AG04450 (cell line): ENCODE measurements at regions of chr11 and their contacts with region 1.

Region 1: DNA sequence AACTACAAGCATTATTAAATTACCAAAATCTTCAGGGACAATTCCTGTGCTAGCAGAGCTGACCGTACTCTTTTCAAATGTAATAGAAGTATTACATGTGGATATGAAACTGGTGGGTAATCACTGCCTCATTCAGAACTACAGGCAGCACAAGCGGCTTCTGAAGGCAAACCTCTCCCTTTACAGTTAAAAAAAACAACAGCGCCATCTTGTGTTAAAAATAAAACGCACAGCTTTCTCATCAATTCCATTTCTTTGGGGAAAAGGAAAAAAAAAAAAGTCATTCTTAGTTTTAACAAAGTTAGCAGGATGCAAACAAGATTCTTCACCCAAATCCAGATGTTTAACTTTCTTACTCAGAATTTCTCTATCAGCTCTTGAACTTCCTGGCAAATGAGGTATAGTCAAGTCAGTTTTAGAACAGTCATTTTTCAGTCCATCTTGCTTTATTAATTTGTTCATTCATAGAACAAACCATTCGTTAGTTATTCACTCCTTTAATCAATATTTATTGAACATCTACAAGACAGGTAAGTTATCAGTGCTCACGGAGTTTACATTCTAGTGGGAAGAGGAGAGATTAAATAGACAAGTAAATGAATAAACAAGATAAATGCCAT is 331.8 kb upstream of the MPPED2 start:
- DNase-seq: peak; percentile 4
- H3K4me3 ChIP-seq: no peak overlapping the region
- H3K27ac ChIP-seq: no peak overlapping the region
- H3K27me3 ChIP-seq: no peaks in the 10 kb centered on the region
- CTCF ChIP-seq: peak; percentile 58

Region 2: GRCh38 chr11:30895046-30895445 is 22.9 kb before region 1 on chr11:
- CTCF ChIA-PET with region 1: interaction called, 10 read pairs
- POLR2A ChIA-PET with region 1: no interaction called
- DNase-seq: no peak
- H3K4me3 ChIP-seq: no peak overlapping the region
- H3K27ac ChIP-seq: no peak overlapping the region
- H3K27me3 ChIP-seq: no peaks in the 10 kb centered on the region
- CTCF ChIP-seq: no peak

Region 3: DNA sequence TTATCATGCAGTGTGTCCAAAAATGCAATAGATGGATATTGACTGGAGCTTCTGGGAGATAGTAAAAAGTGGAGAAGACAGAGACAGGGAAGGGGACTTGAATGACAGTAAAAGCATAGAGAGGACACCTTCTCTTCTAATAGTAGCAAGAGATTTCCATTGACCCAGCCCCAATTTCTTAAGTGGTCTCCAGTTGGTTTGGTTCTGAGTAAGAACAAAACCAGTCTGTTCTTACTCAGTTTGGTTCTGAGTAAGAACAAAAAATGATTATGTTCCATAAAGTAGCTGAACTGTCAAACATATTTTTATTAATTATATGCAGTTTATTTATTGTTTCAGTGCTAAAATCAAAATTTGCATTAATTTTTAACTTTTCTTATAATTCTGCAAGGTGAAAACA is 15.0 kb before region 1 on chr11:
- CTCF ChIA-PET with region 1: interaction called, 11 read pairs
- POLR2A ChIA-PET with region 1: no interaction called
- DNase-seq: no peak
- H3K4me3 ChIP-seq: no peak overlapping the region
- H3K27ac ChIP-seq: no peak overlapping the region
- H3K27me3 ChIP-seq: no peaks in the 10 kb centered on the region
- CTCF ChIP-seq: no peak